SK-N-SH (cell line): ENCODE measurements at regions of chr16 and their contacts with region 1.

Region 1: GRCh38 chr16:30698139-30698815 is 694 bp upstream of the SRCAP start:
- DNase-seq: peak; percentile 99
- H3K4me3 ChIP-seq: peak overlapping the region; percentile 78
- H3K27ac ChIP-seq: peak overlapping the region; percentile 99 to 100
- H3K4me1 ChIP-seq: peaks cover 12 to 15% of the 10 kb centered on the region in 2 experiments
- H3K27me3 ChIP-seq: no peaks in the 10 kb centered on the region
- CTCF ChIP-seq: no peak
- EP300 ChIP-seq: 0 out of 4 replicates have a peak, but pooled peaks of 1 of the 2 experiments have one; percentile 8
- RAD21 ChIP-seq: no peak

Region 2: DNA sequence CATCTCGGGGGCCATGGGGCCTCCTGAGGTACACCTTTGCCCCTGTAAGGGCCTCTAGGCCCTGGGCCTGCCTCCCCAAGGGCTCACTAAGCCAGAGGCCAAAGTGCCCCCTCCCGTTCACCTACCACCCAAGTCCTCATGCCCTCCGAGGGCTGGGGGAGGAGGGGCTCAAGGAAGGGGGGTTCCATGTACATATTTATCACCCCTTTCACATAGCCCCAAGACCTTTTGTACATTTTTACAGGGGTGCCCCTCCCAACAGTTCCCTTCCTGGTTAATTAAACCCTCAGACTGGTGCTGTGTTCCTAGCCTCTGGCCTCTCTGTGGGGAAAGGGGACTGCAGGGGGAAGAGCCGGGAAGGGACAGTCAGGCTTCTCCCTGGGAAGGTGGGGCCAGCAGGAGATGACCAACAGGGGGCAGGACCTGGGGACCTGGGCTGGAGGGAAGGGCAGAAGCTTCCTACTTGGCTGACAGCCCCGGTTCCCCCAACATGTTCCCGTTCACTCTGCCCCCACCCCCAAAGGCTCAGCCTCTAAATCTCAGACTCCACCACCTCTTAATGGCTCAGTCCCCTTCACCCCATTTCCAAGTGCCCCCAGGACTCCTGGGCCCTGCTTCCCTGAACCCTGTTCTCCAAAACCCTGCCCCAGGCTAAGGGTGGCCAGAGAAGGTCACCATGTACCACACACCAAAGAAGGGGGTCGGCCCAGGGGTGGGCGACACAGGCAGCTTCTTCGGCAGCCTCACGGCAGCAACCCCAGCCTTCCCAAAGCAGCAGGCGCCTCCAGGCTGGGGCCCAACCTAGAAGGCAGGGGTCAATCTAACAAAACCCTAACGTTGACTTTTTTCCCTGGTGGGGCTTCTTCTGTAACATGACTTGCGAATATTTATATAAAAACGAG is 28.1 kb before region 1 on chr16:
- CTCF ChIA-PET with region 1: interaction called, 16 read pairs
- POLR2A ChIA-PET with region 1: no interaction called
- DNase-seq: no peak
- H3K4me3 ChIP-seq: no peak overlapping the region
- H3K27ac ChIP-seq: no peak overlapping the region
- H3K4me1 ChIP-seq: no peaks in the 10 kb centered on the region
- H3K27me3 ChIP-seq: no peaks in the 10 kb centered on the region
- CTCF ChIP-seq: no peak; the same call in 1 of the 2 replicates
- EP300 ChIP-seq: no peak
- RAD21 ChIP-seq: no peak

Region 3: GRCh38 chr16:30677931-30678585 is 20.2 kb before region 1 on chr16:
- CTCF ChIA-PET with region 1: interaction called, 16 read pairs
- POLR2A ChIA-PET with region 1: no interaction called
- DNase-seq: no peak
- H3K4me3 ChIP-seq: no peak overlapping the region
- H3K27ac ChIP-seq: no peak overlapping the region
- H3K4me1 ChIP-seq: no peaks in the 10 kb centered on the region
- H3K27me3 ChIP-seq: no peaks in the 10 kb centered on the region
- CTCF ChIP-seq: no peak
- EP300 ChIP-seq: no peak
- RAD21 ChIP-seq: no peak

Region 4: DNA sequence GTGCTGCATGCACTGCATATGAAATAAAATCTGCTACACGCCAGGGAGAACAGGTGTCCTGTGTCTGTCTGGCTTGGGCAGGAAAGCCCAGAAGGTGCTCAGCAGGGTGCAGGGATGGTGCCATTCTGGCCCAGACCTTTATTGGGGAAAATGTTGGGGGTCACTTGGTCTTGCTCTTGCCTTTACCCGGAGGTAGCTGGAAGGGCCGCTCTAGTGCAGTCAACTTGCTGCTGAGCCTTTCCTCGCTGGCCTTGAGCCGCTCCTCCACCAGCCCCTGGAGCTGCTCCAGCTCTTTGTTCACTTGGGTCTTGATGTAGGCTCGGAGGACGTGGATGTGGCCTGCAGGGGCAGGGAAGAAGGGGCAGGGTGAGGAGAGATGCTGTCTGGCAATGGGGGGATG is 59.0 kb after region 1 on chr16:
- CTCF ChIA-PET with region 1: no interaction called
- POLR2A ChIA-PET with region 1: no interaction called
- DNase-seq: no peak
- H3K4me3 ChIP-seq: no peak overlapping the region
- H3K27ac ChIP-seq: no peak overlapping the region
- H3K4me1 ChIP-seq: peaks cover 7 to 12% of the 10 kb centered on the region in 2 experiments; a peak in 3 of 4 replicates
- H3K27me3 ChIP-seq: no peaks in the 10 kb centered on the region
- CTCF ChIP-seq: no peak
- EP300 ChIP-seq: no peak
- RAD21 ChIP-seq: no peak